ENCODE measurements at regions of chr2 and their contacts with region 1.

Region 1: GRCh38 chr2:44543773-44544725 is 182.3 kb downstream of the CAMKMT start:
- DNase-seq: no peak
- ATAC-seq: no peak
- H3K4me3 ChIP-seq: no peak overlapping the region
- H3K27ac ChIP-seq: no peak overlapping the region
- H3K4me1 ChIP-seq: peaks cover 8 to 10% of the 10 kb centered on the region in 2 experiments
- H3K27me3 ChIP-seq: no peaks in the 10 kb centered on the region
- CTCF ChIP-seq: no peak
- EP300 ChIP-seq: no peak
- POLR2A ChIP-seq: no peak
- RAD21 ChIP-seq: no peak

Region 2: GRCh38 chr2:42987112-42987922 is 1556.7 kb before region 1 on chr2:
- CTCF ChIA-PET with region 1: no interaction called
- POLR2A ChIA-PET with region 1: no interaction called
- in situ Hi-C with region 1: no loop called
- intact Hi-C with region 1: no loop called
- DNase-seq: no peak
- ATAC-seq: no peak
- H3K4me3 ChIP-seq: no peak overlapping the region
- H3K27ac ChIP-seq: no peak overlapping the region
- H3K4me1 ChIP-seq: peaks cover 2 to 7% of the 10 kb centered on the region in 2 experiments; a peak in 3 of 5 replicates
- H3K27me3 ChIP-seq: no peaks in the 10 kb centered on the region
- CTCF ChIP-seq: no peak
- EP300 ChIP-seq: no peak
- POLR2A ChIP-seq: no peak
- RAD21 ChIP-seq: no peak

Region 3: GRCh38 chr2:44572196-44572900 is 28.3 kb after region 1 on chr2:
- CTCF ChIA-PET with region 1: no interaction called
- POLR2A ChIA-PET with region 1: no interaction called
- in situ Hi-C with region 1: no loop called
- intact Hi-C with region 1: loop called (anchors 1 kb)
- DNase-seq: no peak
- ATAC-seq: no peak
- H3K4me3 ChIP-seq: no peak overlapping the region
- H3K27ac ChIP-seq: no peak overlapping the region
- H3K4me1 ChIP-seq: no peaks in the 10 kb centered on the region
- H3K27me3 ChIP-seq: no peaks in the 10 kb centered on the region
- CTCF ChIP-seq: no peak
- EP300 ChIP-seq: no peak
- POLR2A ChIP-seq: no peak
- RAD21 ChIP-seq: no peak